Activated CD8-positive, alpha-beta T cell treated with anti-CD3 and anti-CD28 coated beads, Interleukin-2, amount 10 ng/mL, durations not matched to agents 7 days and 5 days (primary cell): ENCODE measurements at regions of chr1 and their contacts with region 1.

Region 1: GRCh38 chr1:40476924-40477677 is at the start of gene ZFP69:
- DNase-seq: peak; percentile 80
- ATAC-seq: peak; percentile 92
- H3K4me3 Mint-ChIP-seq: peak within 1 kb of the TSS; percentile 76
- H3K27ac Mint-ChIP-seq: peak within 1 kb of the TSS; percentile 81
- H3K4me1 Mint-ChIP-seq: peaks cover 20% of the 10 kb centered on the region
- H3K27me3 Mint-ChIP-seq: no peaks in the 10 kb centered on the region
- total RNA-seq, gene ZFP69: 2.2 to 2.7 TPM

Region 2: GRCh38 chr1:40508375-40509341 is 31.6 kb after region 1 on chr1 and contains the start of gene EXO5:
- CTCF ChIA-PET with region 1: no interaction called
- POLR2A ChIA-PET with region 1: interaction called, 15 read pairs
- DNase-seq: peak; percentile 90
- ATAC-seq: peak; percentile 99
- H3K4me3 Mint-ChIP-seq: peak within 1 kb of the TSS; percentile 82
- H3K27ac Mint-ChIP-seq: peak within 1 kb of the TSS; percentile 90
- H3K4me1 Mint-ChIP-seq: peaks cover 15% of the 10 kb centered on the region
- H3K27me3 Mint-ChIP-seq: no peaks in the 10 kb centered on the region
- total RNA-seq, gene EXO5: 21.0 to 24.2 TPM